ENCODE measurements at regions of chr11 and their contacts with region 1.

Region 1: GRCh38 chr11:33996498-33997454 is 54.8 kb upstream of the CAPRIN1 start:
- DNase-seq: peak in 4 of 5 donors; percentile 44 to 69 (median 60)
- ATAC-seq: peak; percentile 82 to 98 (median 95)
- H3K4me3 ChIP-seq: no peak overlapping the region
- H3K27ac ChIP-seq: no peak overlapping the region
- H3K4me1 ChIP-seq: peaks cover 0 to 4% (median 0%) of the 10 kb centered on the region in 12 donors
- H3K27me3 ChIP-seq: peaks cover 0 to 14% (median 2%) of the 10 kb centered on the region in 9 donors
- CTCF ChIP-seq: peak; percentile 72 to 87 (median 80)
- POLR2A ChIP-seq: no peak

Region 2: GRCh38 chr11:34051349-34052035 is 54.7 kb after region 1 on chr11 and contains the start of gene CAPRIN1:
- intact Hi-C with region 1: loop called in 2 of 10 experiments (anchors 5 kb)
- DNase-seq: peak; percentile 89 to 95 (median 92)
- ATAC-seq: peak; percentile 81 to 94 (median 90)
- H3K4me3 ChIP-seq: peak within 1 kb of the TSS; percentile 90 to 99 (median 94)
- H3K27ac ChIP-seq: peak within 1 kb of the TSS; percentile 96 to 100 (median 99)
- H3K4me1 ChIP-seq: peaks cover 0 to 45% (median 37%) of the 10 kb centered on the region in 12 donors
- H3K27me3 ChIP-seq: no peaks in the 10 kb centered on the region
- CTCF ChIP-seq: peak in 1 of 12 donors; percentile 14
- POLR2A ChIP-seq: peak in 1 of 2 donors; percentile 69
- total RNA-seq, gene CAPRIN1: 94.2 to 134 (median 114) TPM

Region 3: GRCh38 chr11:34068111-34068510 is 71.3 kb after region 1 on chr11:
- intact Hi-C with region 1: no loop called
- DNase-seq: no peak
- ATAC-seq: peak; percentile 76 to 91 (median 90)
- H3K4me3 ChIP-seq: no peak overlapping the region
- H3K27ac ChIP-seq: peak overlapping the region in 8 of 12 donors; percentile 0 to 44 (median 28)
- H3K4me1 ChIP-seq: peaks cover 0 to 69% (median 41%) of the 10 kb centered on the region in 12 donors
- H3K27me3 ChIP-seq: no peaks in the 10 kb centered on the region
- CTCF ChIP-seq: no peak
- POLR2A ChIP-seq: no peak

Region 4: GRCh38 chr11:34114471-34114870 is 117.7 kb after region 1 on chr11:
- intact Hi-C with region 1: loop called in 7 of 10 experiments (anchors 5 to 10 kb)
- DNase-seq: no peak
- ATAC-seq: peak in 2 of 4 donors; percentile 30 to 33
- H3K4me3 ChIP-seq: no peak overlapping the region
- H3K27ac ChIP-seq: no peak overlapping the region
- H3K4me1 ChIP-seq: peaks cover 0 to 12% (median 0%) of the 10 kb centered on the region in 12 donors
- H3K27me3 ChIP-seq: no peaks in the 10 kb centered on the region
- CTCF ChIP-seq: no peak
- POLR2A ChIP-seq: no peak

Region 5: GRCh38 chr11:34366522-34366921 is 369.7 kb after region 1 on chr11:
- intact Hi-C with region 1: loop called in 5 of 10 experiments (anchors 2 to 5 kb)
- DNase-seq: no peak
- ATAC-seq: no peak
- H3K4me3 ChIP-seq: no peak overlapping the region
- H3K27ac ChIP-seq: no peak overlapping the region
- H3K4me1 ChIP-seq: peaks cover 0 to 6% (median 0%) of the 10 kb centered on the region in 12 donors
- H3K27me3 ChIP-seq: peaks cover 0 to 6% (median 0%) of the 10 kb centered on the region in 9 donors
- CTCF ChIP-seq: peak in 6 of 12 donors; percentile 17 to 42 (median 34)
- POLR2A ChIP-seq: no peak